ENCODE measurements at regions of chr14 and their contacts with region 1.

Region 1: GRCh38 chr14:100096570-100096971 is 31.3 kb downstream of the EVL start:
- DNase-seq: peak; percentile 40
- ATAC-seq: peak; percentile 67
- H3K4me3 ChIP-seq: no peak overlapping the region
- H3K27ac ChIP-seq: no peak overlapping the region
- H3K4me1 ChIP-seq: peaks cover 20% of the 10 kb centered on the region
- H3K27me3 ChIP-seq: no peaks in the 10 kb centered on the region
- CTCF ChIP-seq: no peak

Region 2: DNA sequence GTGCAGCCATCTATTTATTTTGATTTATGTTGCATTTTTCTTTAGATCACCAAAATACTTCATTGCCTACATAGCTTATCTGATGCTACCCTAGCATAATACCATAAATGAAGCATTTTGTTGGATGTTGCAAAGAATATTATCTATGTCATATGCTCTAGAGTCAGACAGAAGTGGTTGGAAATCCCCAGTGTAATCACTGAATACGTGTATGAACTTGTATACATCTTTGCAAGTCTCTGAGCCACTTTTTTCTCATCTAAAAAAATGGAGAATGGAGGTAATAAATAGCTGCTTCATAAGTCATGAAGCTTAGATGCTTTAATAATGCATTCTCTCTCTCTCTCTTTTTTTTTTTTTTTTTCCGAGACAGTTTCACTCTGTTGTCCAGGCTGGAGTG is 12.9 kb before region 1 on chr14:
- CTCF ChIA-PET with region 1: interaction called, 15 read pairs
- POLR2A ChIA-PET with region 1: no interaction called
- intact Hi-C with region 1: no loop called
- DNase-seq: no peak
- ATAC-seq: no peak
- H3K4me3 ChIP-seq: no peak overlapping the region
- H3K27ac ChIP-seq: no peak overlapping the region
- H3K4me1 ChIP-seq: no peaks in the 10 kb centered on the region; the same call in 1 of the 2 replicates
- H3K27me3 ChIP-seq: no peaks in the 10 kb centered on the region
- CTCF ChIP-seq: no peak